Endothelial cell of umbilical vein (primary cell): ENCODE measurements at regions of chr1 and their contacts with region 1.

Region 1: DNA sequence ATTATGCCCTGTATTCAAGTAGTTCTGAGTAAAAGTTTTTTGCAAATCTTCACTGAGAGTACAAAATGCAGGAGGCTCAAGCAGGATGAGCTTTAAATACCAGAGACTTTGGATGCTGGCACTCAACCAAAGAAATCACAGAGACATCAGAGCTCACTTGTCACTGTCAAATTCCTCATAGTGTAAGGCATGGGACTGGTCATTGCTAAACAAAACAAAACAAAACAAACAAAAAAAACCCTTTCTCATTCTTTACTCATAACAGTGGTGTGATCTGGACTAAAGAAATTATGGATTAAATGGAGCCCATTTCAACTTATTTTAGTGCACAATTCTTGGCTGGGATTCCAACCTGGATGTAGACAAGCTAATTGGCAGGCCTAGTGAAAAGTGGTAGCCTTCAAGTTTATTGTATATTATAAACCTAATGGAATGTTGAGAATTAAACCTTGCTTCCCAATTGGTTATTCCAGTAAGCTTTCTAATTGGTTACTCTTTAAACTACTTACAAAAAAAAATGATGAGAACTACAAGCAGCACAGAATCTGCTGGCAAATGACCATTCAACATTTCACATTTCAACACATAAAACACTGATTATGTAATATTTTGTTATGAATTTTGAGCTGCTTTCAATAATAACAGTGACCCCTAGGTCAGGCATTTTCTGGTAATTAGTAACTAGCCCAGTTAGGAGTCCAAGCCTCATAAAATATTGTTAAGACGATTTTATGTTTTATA is 30.6 kb upstream of the NEK7 start:
- DNase-seq: peak; percentile 80
- H3K4me3 ChIP-seq: no peak overlapping the region
- H3K27ac ChIP-seq: peak overlapping the region; percentile 52
- H3K4me1 ChIP-seq: peaks cover 33% of the 10 kb centered on the region
- H3K27me3 ChIP-seq: no peaks in the 10 kb centered on the region
- CTCF ChIP-seq: no peak
- POLR2A ChIP-seq: no peak

Region 2: GRCh38 chr1:198151688-198152087 is 25.5 kb after region 1 on chr1:
- CTCF ChIA-PET with region 1: interaction called, 15 read pairs
- POLR2A ChIA-PET with region 1: interaction called, 3 read pairs
- dilution Hi-C with region 1: no loop called
- intact Hi-C with region 1: loop called (anchors 1 kb)
- DNase-seq: peak; percentile 92
- H3K4me3 ChIP-seq: peak overlapping the region in 1 of 3 experiments; percentile 7
- H3K27ac ChIP-seq: peak overlapping the region; percentile 86
- H3K4me1 ChIP-seq: peaks cover 55% of the 10 kb centered on the region
- H3K27me3 ChIP-seq: no peaks in the 10 kb centered on the region
- CTCF ChIP-seq: no peak
- POLR2A ChIP-seq: no peak